Activated CD4-positive, alpha-beta memory T cell treated with anti-CD3 and anti-CD28 coated beads, Interleukin-2, amount 10 ng/mL, durations not matched to agents 7 days and 5 days (primary cell): ENCODE measurements at regions of chr21 and their contacts with region 1.

Region 1: DNA sequence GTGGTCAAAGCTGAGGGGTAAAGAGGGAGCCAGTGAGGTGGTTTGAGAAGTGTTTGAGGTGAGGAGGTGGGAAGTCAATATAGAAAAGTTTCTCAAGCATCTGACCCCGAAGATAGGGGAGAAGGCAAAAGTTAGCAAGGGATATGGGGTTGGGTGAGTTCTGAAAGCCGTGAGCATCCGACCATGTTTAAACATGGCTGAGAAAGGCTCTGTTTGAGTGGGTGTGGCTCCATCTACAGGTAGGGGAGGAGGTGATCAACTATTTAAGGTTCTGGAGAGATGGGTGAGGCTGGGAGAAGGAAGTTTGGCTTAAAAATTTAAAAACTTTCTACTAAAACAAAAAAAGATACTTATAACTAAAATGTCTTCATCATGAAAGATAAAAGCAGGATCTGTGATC is 273.8 kb downstream of the KCNJ6 start:
- DNase-seq: peak; percentile 26
- H3K4me3 Mint-ChIP-seq: no peak overlapping the region
- H3K27ac Mint-ChIP-seq: no peak overlapping the region
- H3K4me1 Mint-ChIP-seq: peaks cover 4% of the 10 kb centered on the region
- H3K27me3 Mint-ChIP-seq: peaks cover 32% of the 10 kb centered on the region

Region 2: GRCh38 chr21:37563641-37564340 is 78.7 kb before region 1 on chr21:
- CTCF ChIA-PET with region 1: interaction called, 10 read pairs
- POLR2A ChIA-PET with region 1: interaction called, 3 read pairs
- DNase-seq: peak; percentile 92
- H3K4me3 Mint-ChIP-seq: peak overlapping the region; percentile 91
- H3K27ac Mint-ChIP-seq: peak overlapping the region; percentile 99
- H3K4me1 Mint-ChIP-seq: peaks cover 24% of the 10 kb centered on the region
- H3K27me3 Mint-ChIP-seq: peaks cover 2% of the 10 kb centered on the region

Region 3: DNA sequence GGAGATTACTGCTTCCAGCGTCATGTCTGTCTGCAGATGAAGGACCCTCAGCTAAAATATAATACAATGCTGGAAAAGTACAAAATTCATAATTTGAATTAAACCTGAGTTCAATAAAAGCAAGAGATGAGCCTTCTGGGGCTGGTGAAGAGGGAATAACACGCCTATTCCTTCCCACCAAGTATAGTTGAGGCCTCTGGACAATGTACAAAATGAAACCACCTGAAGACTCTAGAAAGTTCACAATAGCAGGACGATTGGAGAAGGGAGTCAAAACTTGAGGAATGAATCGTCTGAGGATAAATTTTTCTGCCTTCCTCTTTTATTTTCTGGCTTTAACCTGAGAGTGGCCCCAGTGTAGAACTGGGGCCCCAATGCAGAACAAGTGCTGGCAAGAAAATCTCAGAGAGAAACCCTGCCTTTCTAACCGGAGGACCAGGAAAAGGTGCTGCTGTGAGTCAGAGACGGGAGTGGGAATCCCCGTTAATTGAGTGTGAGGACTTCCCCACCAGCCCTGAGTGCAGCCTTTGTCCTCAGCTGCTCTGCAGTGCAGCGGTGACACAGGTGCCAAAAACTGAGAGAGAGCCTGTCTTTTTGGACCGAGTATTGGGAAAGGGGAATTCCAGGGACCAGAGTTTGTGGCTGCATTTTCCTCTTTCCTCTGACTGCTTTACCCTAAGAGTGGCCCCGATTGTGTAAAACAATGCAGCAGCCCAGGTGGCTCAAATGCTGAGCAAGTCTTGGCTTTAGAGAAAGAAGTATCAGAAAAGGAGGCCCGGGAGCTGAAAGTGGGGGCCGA is 11.0 kb before region 1 on chr21:
- CTCF ChIA-PET with region 1: no interaction called
- POLR2A ChIA-PET with region 1: no interaction called
- DNase-seq: no peak
- H3K4me3 Mint-ChIP-seq: no peak overlapping the region
- H3K27ac Mint-ChIP-seq: no peak overlapping the region
- H3K4me1 Mint-ChIP-seq: no peaks in the 10 kb centered on the region
- H3K27me3 Mint-ChIP-seq: peaks cover 47% of the 10 kb centered on the region

Region 4: GRCh38 chr21:37658817-37659458 is 16.4 kb after region 1 on chr21:
- CTCF ChIA-PET with region 1: no interaction called
- POLR2A ChIA-PET with region 1: no interaction called
- DNase-seq: no peak
- H3K4me3 Mint-ChIP-seq: no peak overlapping the region
- H3K27ac Mint-ChIP-seq: no peak overlapping the region
- H3K4me1 Mint-ChIP-seq: no peaks in the 10 kb centered on the region
- H3K27me3 Mint-ChIP-seq: peaks cover 7% of the 10 kb centered on the region